ENCODE measurements at regions of chr2 and their contacts with region 1.

Region 1: GRCh38 chr2:38284971-38285370 is 92.1 kb downstream of the ATL2 start:
- DNase-seq: peak; percentile 18
- H3K4me3 ChIP-seq: no peak overlapping the region
- H3K27ac ChIP-seq: peak overlapping the region; percentile 40 to 57 (median 52)
- H3K4me1 ChIP-seq: peaks cover 0 to 23% (median 11%) of the 10 kb centered on the region in 4 donors
- H3K27me3 ChIP-seq: no peaks in the 10 kb centered on the region
- CTCF ChIP-seq: no peak
- EP300 ChIP-seq: peak; percentile 14
- POLR2A ChIP-seq: no peak

Region 2: DNA sequence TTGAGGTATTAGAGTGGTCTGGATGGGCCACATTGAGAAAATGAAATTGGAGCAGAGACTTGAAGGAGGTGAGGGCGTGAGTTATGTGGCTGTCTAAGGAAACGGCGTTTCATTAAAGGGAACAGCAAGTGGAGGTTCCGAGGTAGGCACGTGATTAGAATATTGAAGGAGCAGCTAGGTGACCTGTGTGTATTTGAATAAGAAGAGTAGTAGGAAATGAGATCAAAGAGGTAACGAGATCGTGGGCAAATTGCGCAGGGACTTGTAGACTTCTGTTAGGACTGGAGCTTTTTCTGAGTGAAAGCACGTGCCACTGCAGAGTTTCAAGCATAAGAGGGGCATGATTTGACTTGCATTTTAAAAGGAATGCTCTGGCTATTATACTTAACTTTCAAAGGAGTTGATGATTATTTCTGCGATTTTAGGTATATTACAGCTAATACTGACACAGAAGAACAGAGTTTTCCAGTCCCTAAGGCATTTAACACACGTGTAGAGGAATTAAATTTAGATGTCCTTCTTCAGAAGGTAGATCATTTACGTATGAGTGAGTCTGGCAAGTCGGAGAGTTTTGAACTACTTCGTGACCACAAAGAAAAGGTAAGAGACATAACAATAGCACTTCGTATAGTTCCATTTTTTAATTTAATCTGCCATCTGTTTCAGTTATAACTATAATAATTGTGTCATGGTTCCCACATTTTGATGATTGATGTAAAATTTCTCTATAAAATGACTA is 311.2 kb before region 1 on chr2:
- in situ Hi-C with region 1: loop called in 1 of 4 experiments (anchors 10 kb)
- intact Hi-C with region 1: no loop called
- DNase-seq: no peak
- H3K4me3 ChIP-seq: no peak overlapping the region
- H3K27ac ChIP-seq: no peak overlapping the region
- H3K4me1 ChIP-seq: no peaks in the 10 kb centered on the region
- H3K27me3 ChIP-seq: no peaks in the 10 kb centered on the region
- CTCF ChIP-seq: no peak
- EP300 ChIP-seq: no peak
- POLR2A ChIP-seq: no peak

Region 3: DNA sequence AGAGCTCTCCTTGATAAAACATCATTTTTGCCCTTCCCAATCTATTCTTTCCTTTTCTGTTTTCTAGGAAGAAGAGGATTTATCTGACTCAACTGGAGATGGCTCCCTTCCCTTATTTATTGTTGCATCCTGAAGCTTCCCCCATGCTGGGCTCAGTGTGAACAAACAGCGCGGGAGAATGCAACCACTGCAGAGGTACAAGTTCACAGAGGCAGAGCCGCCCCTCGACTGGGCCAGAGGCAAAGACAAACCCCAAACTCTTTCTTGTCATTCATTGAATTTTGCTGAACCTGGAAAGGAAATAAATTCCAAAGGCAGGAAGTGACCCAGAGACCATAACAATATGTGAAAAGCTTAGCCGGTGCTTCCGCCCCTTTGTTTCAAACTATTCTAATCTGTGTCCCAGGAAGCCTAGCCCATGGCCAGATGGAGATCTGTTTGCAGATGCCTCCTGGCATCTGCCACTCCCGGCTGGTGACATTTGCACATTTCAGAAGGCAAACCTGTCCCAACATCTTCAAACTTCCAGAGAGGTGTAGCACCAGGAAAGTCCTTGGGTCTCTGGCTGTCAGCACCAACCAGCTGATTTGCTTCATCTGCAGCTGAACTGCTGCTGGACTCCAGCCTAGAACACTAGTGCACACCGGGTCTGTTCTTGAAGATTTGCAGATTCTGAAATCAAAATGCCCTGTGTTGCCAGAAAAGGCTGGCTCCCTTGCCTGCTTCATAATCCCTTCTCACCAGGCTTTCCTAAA is 1231.6 kb after region 1 on chr2:
- in situ Hi-C with region 1: no loop called
- intact Hi-C with region 1: no loop called
- DNase-seq: peak; percentile 29
- H3K4me3 ChIP-seq: no peak overlapping the region
- H3K27ac ChIP-seq: peak overlapping the region in 3 of 4 donors; percentile 67 to 70 (median 68)
- H3K4me1 ChIP-seq: peaks cover 14 to 51% (median 23%) of the 10 kb centered on the region in 4 donors
- H3K27me3 ChIP-seq: no peaks in the 10 kb centered on the region
- CTCF ChIP-seq: no peak
- EP300 ChIP-seq: no peak
- POLR2A ChIP-seq: no peak

Measured in transverse colon (tissue), 4 donors.